Activated naive CD4-positive, alpha-beta T cell treated with anti-CD3 and anti-CD28 coated beads for 36 hours (primary cell): ENCODE measurements at regions of chr12 and their contacts with region 1.

Region 1: DNA sequence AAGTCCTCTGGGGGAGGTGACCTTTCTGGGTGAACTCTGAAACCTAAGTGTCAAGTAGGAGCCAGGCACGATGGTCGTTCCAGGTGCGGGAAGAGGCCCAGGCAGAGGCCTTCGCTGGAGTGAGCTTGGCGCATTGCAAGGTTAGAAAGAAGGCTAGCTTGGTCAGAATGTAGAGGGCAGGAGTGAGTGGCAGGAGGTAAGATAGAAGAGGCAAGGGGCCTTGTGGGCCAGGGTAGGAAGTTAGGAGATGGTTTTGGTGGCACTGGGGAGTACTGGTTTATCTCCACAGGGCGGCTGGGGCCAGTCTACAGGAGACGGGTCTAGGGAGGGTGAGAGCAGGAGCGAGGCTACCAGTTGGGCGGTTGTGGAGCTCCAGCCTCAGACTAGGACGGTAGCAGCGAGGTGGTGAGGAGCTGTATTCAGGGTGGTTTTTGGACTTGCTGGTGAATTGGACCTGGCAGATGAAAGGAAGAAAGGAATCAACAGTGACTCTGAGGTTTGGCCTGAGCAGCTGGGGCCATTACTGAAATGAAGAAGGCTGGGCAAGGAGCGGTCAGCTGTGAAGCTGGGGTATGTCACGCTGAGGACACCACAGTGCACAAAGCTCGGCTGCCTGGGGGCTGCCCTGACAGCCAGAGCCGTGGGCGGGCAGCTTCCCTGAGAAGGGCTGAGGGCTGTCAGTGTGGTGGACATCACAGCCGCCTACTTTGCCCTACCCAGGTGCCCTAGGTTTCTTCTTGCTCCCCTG is 9.0 kb downstream of the MLXIP start:
- DNase-seq: no peak
- H3K4me3 Mint-ChIP-seq: no peak overlapping the region
- H3K27ac Mint-ChIP-seq: no peak overlapping the region
- H3K4me1 Mint-ChIP-seq: peaks cover 89% of the 10 kb centered on the region
- H3K27me3 Mint-ChIP-seq: no peaks in the 10 kb centered on the region

Region 2: GRCh38 chr12:122097927-122098756 is 10.5 kb after region 1 on chr12:
- CTCF ChIA-PET with region 1: interaction called, 27 read pairs
- intact Hi-C with region 1: loop called (anchors 1 kb)
- DNase-seq: no peak
- H3K4me3 Mint-ChIP-seq: peak overlapping the region; percentile 9
- H3K27ac Mint-ChIP-seq: peak overlapping the region; percentile 67
- H3K4me1 Mint-ChIP-seq: peaks cover 65% of the 10 kb centered on the region
- H3K27me3 Mint-ChIP-seq: no peaks in the 10 kb centered on the region